ENCODE measurements at regions of chr3 and their contacts with region 1.

Region 1: GRCh38 chr3:119559441-119559963 is at the start of gene CD80:
- DNase-seq: peak; percentile 62
- H3K4me3 Mint-ChIP-seq: no peak within 1 kb of the TSS
- H3K27ac Mint-ChIP-seq: no peak within 1 kb of the TSS
- H3K4me1 Mint-ChIP-seq: no peaks in the 10 kb centered on the region
- H3K27me3 Mint-ChIP-seq: peaks cover 8% of the 10 kb centered on the region
- CTCF ChIP-seq: peak; percentile 47
- total RNA-seq, gene CD80: not detected in 2 replicates

Region 2: DNA sequence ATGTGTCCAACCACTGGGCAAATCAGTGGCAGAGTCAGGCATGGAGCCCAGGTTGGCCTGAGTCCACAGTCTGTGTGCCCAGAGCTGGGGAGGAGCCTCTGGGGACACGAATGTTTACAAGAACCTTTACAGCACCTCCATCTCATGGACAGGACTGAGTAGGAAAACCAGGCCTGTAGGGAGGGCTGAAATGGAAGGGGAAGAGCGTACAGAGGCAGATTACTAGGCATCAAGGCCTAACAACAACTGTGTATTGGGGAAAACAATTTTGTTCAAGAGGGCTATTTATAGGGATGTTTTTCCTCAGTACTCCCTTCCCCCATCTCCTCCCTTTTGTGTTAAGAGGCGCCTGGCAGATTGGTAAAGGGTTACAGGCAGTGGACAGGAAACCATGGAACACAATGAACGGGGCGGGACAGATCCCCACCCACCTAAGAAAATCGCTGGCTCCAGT is 280.4 kb before region 1 on chr3:
- CTCF ChIA-PET with region 1: no interaction called
- intact Hi-C with region 1: loop called (anchors 1 kb)
- DNase-seq: no peak
- H3K4me3 Mint-ChIP-seq: no peak overlapping the region
- H3K27ac Mint-ChIP-seq: no peak overlapping the region
- H3K4me1 Mint-ChIP-seq: no peaks in the 10 kb centered on the region
- H3K27me3 Mint-ChIP-seq: peaks cover 14% of the 10 kb centered on the region
- CTCF ChIP-seq: no peak

Region 3: DNA sequence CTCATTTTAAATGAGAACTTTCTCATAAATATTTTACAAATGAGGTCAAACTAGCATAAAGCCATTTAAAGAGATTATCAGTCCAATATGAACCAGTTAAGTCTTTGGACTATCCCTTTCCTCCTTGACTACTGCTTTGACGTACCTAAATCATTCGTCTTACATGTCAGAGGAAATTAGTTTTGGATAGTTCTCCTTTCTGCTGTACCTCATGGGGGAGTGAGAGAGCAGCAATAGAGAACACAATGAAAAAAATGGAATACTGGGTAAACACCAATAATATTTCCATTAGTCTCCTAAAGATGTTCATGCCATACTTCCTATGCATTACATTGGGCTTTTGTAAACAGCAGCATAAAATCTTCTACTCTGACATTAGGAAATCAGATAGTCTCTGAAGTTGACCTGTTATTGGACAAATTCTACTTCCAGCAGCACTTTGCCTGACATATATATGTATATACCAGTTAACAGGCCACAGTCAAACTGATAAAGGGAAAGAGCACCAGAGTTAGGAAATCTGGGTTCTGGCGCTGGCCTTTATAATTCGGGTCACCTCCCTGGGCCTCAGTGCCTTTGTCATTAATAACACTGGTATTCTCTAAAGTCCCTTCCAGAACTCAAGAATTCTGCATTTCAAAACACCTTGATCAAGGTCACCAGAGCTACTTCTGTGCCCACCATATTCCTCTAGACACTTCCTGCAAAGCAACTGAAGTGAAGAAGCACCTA is 34.4 kb before region 1 on chr3:
- CTCF ChIA-PET with region 1: no interaction called
- intact Hi-C with region 1: loop called (anchors 1 kb)
- DNase-seq: peak; percentile 2
- H3K4me3 Mint-ChIP-seq: no peak overlapping the region
- H3K27ac Mint-ChIP-seq: no peak overlapping the region
- H3K4me1 Mint-ChIP-seq: no peaks in the 10 kb centered on the region
- H3K27me3 Mint-ChIP-seq: no peaks in the 10 kb centered on the region
- CTCF ChIP-seq: no peak

Region 4: GRCh38 chr3:119637679-119638525 is 78.4 kb after region 1 on chr3:
- CTCF ChIA-PET with region 1: no interaction called
- intact Hi-C with region 1: no loop called
- DNase-seq: no peak
- H3K4me3 Mint-ChIP-seq: no peak overlapping the region
- H3K27ac Mint-ChIP-seq: no peak overlapping the region
- H3K4me1 Mint-ChIP-seq: no peaks in the 10 kb centered on the region
- H3K27me3 Mint-ChIP-seq: no peaks in the 10 kb centered on the region
- CTCF ChIP-seq: no peak

Measured in Calu3 (cell line).